ENCODE measurements at regions of chr7 and their contacts with region 1.

Region 1: GRCh38 chr7:134789967-134790685 is 10.7 kb downstream of the CALD1 start:
- DNase-seq: no peak

Region 2: DNA sequence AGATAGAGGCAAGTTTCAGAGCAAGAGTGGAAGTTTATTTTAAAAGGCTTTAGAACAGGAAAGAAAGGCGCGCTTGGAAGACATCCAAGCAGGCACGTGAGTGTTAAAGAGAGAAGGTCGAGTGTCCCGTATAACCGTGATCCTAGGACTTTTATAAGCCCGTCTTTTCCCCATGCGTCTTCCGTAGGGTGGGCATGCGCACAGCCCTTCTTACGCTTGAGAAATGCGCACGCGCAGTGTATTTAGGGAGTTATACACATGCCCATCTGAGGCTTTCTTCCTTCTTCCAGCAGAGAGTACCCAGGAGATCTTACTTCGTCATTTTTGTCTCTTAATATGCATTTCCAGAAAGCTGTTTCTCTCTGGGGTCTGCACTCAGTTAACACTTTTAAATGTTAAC is 41.7 kb after region 1 on chr7:
- intact Hi-C with region 1: loop called in 1 of 2 experiments (anchors 5 kb)
- DNase-seq: no peak

Measured in posterior vena cava (tissue), 2 donors.